ENCODE measurements at regions of chr1 and their contacts with region 1.

Region 1: DNA sequence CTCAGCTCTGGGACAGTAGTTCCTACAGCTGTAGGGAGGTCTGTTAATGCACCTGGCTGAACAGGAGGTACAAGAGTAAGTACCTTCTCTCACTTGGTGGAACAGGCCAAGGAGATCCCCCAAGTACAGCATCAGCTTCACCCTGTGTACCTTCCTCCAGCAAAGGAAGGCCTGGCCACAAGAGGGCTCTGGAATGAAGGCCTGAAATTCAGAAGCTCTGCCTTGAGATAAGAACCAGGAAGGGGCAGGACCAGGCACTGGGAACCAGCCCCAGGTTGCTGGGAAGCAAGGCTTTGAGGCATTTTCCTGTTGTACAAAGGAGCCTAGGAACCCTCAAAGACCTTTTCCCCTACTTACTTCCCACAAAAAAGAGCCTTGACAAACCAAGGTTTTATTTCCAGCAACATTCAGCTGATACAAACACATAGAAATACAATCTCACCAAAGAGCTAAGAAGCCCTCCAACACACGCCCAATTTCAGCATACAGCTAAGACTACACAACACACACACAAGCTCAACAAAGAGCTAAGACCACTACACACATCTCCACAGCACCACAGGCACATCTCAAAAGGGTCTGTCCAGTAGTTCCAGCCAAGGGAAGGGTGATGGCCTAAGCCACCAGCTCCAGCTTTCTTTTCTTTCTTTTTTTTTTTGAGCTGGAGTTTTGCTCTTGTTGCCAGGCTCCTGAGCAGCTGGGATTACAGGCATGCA is 23.5 kb downstream of the F11R start:
- DNase-seq: peak; percentile 67
- ATAC-seq: peak; percentile 74

Region 2: DNA sequence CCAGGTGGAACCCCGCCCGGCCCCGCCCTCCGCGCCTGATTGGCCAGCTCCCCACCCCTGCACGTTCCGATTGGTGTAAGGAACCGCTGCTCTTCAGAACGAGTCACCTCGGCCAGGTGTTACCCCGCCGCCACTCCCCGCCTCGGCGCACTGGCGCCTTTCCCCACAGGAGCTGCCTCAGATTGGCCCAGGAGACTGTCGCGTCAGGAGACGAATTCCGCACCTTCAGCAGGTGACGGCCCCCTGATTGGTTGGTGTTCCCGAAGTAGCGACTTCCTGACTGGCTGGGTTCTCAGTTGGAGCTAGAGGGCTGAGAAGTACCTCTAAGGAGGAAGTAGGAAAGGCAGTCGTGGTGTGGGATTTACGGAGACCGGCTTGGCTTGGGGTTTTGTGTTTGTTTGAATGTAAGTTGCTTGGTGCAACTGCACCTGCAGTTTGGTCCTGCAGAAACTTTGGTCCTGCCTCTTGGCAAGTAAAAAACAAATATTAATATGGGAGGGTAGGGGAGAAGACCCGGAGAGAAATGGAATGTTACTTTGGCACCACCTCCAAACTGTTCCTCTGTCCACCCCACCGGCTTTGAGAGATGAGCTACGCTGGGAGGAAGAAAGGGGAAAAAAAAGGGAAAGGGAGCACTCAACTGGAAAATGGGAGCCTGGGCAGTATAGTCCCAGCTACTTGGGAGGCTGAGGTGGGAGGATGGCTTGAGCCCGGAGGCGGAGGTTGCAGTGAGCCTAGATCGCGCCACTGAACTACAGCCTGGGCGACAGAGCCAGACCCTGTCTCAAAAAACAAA is 23.9 kb after region 1 on chr1:
- intact Hi-C with region 1: loop called (anchors 1 kb)
- DNase-seq: peak; percentile 69
- ATAC-seq: peak; percentile 87

Region 3: DNA sequence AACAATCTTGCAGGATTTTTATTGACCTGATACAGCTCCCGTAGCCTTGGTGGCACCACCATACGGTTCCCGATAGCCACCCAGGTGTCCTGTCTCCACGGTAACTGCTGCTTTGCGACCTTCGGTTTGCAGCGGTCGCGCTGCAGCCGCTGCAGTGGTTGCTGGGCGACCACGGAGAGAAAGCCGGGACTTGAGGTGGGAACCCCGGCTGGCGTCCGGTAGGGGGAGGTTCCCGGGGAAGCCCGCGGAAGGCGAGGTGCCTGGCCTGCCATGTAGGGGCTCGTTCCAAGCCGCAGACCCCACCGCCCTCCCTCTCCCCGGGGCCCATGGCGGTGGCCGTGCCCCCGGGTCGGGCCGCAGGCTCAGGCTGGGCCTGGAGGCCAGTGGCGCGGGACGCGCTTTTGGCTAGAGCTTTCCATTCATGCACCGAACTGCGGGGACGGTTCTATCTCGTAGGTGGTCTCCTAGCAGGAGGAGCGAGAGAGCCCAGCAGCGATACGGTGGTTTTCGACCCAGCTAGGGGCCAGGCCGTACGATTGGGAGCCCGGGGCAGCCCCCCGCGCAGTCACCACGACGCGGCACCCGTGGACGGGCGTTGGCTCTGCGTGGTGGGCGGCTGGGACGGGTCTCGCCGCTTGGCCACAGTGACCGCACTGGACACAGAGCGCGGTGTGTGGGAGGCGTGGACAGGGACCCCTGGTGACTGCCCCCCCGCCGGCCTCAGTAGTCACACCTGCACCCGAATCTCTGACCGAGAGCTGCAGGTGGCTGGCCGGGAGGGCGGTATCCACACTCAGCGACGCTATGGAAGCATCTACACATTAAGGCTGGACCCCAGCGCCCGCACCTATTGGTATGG is 101.0 kb after region 1 on chr1 and contains the start of gene KLHDC9:
- intact Hi-C with region 1: loop called (anchors 10 kb)
- DNase-seq: peak; percentile 84
- ATAC-seq: peak; percentile 89
- total RNA-seq, gene KLHDC9: 6.6 TPM